ENCODE measurements at regions of chr9 and their contacts with region 1.

Region 1: DNA sequence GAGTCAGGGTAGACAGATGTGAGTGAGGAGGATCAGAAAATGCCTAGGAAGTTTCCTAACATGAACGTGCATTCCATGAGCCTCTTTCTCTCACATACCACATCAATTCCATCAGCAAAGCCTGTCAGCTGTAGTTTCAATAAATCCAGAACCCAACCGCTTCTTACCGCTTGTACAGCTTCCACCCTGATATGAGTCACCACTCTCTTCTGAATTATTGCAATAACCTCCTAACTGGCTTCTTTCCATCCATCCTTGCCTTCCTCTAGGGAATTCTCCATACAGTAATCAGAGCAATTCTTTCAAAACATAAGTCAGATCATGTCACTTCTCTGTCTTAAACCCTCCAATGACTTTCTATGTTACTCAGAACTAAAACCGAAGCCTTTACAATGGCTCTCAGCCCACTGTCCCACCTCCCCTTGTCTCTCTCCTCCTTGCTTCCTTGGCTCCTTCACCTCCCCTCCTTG is 8.1 kb upstream of the RAD23B start:
- DNase-seq: peak; percentile 51 to 97
- H3K4me3 ChIP-seq: no peak overlapping the region
- H3K27ac ChIP-seq: peak overlapping the region; percentile 61
- H3K4me1 ChIP-seq: peaks cover 39% of the 10 kb centered on the region
- H3K27me3 ChIP-seq: no peaks in the 10 kb centered on the region
- CTCF ChIP-seq: no peak

Region 2: GRCh38 chr9:108687006-108687987 is 1412.3 kb after region 1 on chr9:
- CTCF ChIA-PET with region 1: no interaction called
- POLR2A ChIA-PET with region 1: interaction called, 17 read pairs
- intact Hi-C with region 1: no loop called
- DNase-seq: no peak
- H3K4me3 ChIP-seq: no peak overlapping the region
- H3K27ac ChIP-seq: no peak overlapping the region
- H3K4me1 ChIP-seq: peaks cover 16% of the 10 kb centered on the region
- H3K27me3 ChIP-seq: no peaks in the 10 kb centered on the region
- CTCF ChIP-seq: no peak